HEK293T (cell line): ENCODE measurements at regions of chr15 and their contacts with region 1.

Region 1: GRCh38 chr15:78540141-78540928 is at the start of gene PSMA4:
- DNase-seq: peak; percentile 97

Region 2: GRCh38 chr15:78477295-78477694 is 63.0 kb before region 1 on chr15:
- CTCF ChIA-PET with region 1: no interaction called
- POLR2A ChIA-PET with region 1: no interaction called
- DNase-seq: no peak

Region 3: DNA sequence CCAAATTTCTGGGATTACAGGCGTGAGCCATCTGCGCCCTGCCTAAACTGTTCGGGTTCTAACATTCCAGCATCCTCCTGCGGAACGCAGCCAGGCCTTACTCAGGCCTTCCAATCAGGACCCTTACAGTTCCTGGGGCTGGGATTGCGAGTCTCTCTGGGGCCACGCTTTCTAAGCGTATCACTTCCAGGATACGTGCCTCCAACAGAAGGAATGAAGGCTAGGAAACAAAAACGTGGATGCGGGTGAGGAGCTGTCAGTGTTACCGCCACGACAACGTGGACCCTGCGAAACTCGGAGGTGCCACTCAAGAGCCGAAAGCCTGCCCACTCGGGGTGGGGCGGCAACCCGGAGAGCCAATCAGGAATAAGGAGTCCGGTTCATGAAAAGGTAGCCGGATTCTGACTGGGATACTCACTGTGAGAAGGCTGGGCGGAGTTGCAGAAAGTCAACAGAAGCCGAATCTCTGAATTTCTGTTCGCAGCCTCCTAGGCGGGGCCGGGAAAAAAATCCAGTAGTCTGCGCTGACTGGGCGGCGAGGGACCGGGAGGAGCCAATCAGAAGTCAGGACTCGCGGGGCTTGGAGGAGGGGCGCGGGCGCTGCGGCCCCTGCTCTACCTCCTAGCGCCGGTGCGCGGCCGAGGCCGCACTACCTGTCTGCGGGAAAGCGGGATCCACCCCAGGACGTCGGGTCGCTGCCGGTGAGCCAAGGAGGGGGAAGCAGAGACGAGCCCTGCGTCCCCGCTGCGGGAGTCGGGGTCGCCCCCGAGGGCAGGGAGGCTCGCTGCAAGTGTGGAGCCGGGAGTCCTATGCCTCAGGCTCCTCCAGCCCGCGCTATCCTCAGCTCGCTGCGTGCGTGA is 33.1 kb before region 1 on chr15 and contains the start of gene HYKK:
- CTCF ChIA-PET with region 1: no interaction called
- POLR2A ChIA-PET with region 1: interaction called, 27 read pairs
- DNase-seq: peak; percentile 97

Region 4: GRCh38 chr15:78527325-78527724 is 13.0 kb before region 1 on chr15:
- CTCF ChIA-PET with region 1: no interaction called
- POLR2A ChIA-PET with region 1: interaction called, 17 read pairs
- DNase-seq: no peak

Region 5: DNA sequence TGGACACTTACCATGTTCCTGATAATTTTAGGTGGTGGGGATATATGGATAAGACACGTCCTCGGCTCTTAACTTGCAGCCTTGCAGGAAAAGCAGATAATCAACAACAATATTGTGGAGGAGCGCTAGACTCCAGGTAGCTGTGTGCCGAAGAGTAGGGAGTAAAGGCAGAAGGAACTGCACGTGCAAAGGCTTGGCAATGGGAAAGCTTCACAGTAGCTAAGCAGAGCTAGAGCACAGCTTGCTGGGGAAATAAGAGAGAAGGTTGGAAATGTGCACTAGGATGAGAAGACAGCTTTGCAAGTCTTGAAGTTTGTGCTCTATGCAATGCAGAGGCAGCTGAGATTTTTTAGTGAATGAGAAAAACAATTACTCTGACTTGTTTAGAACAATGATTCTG is 12.3 kb after region 1 on chr15:
- CTCF ChIA-PET with region 1: no interaction called
- POLR2A ChIA-PET with region 1: interaction called, 53 read pairs
- DNase-seq: no peak

Region 6: GRCh38 chr15:78565097-78565951 is 25.0 kb after region 1 on chr15 and contains the start of gene CHRNA5:
- CTCF ChIA-PET with region 1: no interaction called
- POLR2A ChIA-PET with region 1: interaction called, 69 read pairs
- DNase-seq: peak; percentile 87